ENCODE measurements at regions of chr7 and their contacts with region 1.

Region 1: GRCh38 chr7:23273141-23273599 is 26.0 kb upstream of the MALSU1 start:
- DNase-seq: peak; percentile 81
- H3K4me3 ChIP-seq: no peak overlapping the region
- H3K27ac ChIP-seq: no peak overlapping the region
- H3K27me3 ChIP-seq: peaks cover 22% of the 10 kb centered on the region
- CTCF ChIP-seq: peak; percentile 89

Region 2: GRCh38 chr7:23261843-23262452 is 11.2 kb before region 1 on chr7:
- CTCF ChIA-PET with region 1: interaction called, 101 read pairs
- POLR2A ChIA-PET with region 1: no interaction called
- DNase-seq: peak; percentile 33
- H3K4me3 ChIP-seq: no peak overlapping the region
- H3K27ac ChIP-seq: no peak overlapping the region
- H3K27me3 ChIP-seq: peaks cover 15% of the 10 kb centered on the region
- CTCF ChIP-seq: peak; percentile 96

Region 3: GRCh38 chr7:23294549-23295400 is 21.6 kb after region 1 on chr7:
- CTCF ChIA-PET with region 1: interaction called, 10 read pairs
- POLR2A ChIA-PET with region 1: no interaction called
- DNase-seq: no peak
- H3K4me3 ChIP-seq: no peak overlapping the region
- H3K27ac ChIP-seq: no peak overlapping the region
- H3K27me3 ChIP-seq: no peaks in the 10 kb centered on the region
- CTCF ChIP-seq: no peak

Region 4: GRCh38 chr7:23474094-23474828 is 201.1 kb after region 1 on chr7:
- CTCF ChIA-PET with region 1: interaction called, 13 read pairs
- POLR2A ChIA-PET with region 1: no interaction called
- DNase-seq: peak; percentile 89
- H3K4me3 ChIP-seq: peak overlapping the region; percentile 84
- H3K27ac ChIP-seq: no peak overlapping the region
- H3K27me3 ChIP-seq: no peaks in the 10 kb centered on the region
- CTCF ChIP-seq: no peak

Region 5: GRCh38 chr7:23523486-23524075 is 250.4 kb after region 1 on chr7:
- CTCF ChIA-PET with region 1: interaction called, 15 read pairs
- POLR2A ChIA-PET with region 1: no interaction called
- DNase-seq: no peak
- H3K4me3 ChIP-seq: no peak overlapping the region
- H3K27ac ChIP-seq: no peak overlapping the region
- H3K27me3 ChIP-seq: no peaks in the 10 kb centered on the region
- CTCF ChIP-seq: no peak

Region 6: GRCh38 chr7:23539494-23539907 is 266.3 kb after region 1 on chr7:
- CTCF ChIA-PET with region 1: interaction called, 24 read pairs
- POLR2A ChIA-PET with region 1: no interaction called
- DNase-seq: no peak
- H3K4me3 ChIP-seq: no peak overlapping the region
- H3K27ac ChIP-seq: no peak overlapping the region
- H3K27me3 ChIP-seq: no peaks in the 10 kb centered on the region
- CTCF ChIP-seq: no peak

Region 7: DNA sequence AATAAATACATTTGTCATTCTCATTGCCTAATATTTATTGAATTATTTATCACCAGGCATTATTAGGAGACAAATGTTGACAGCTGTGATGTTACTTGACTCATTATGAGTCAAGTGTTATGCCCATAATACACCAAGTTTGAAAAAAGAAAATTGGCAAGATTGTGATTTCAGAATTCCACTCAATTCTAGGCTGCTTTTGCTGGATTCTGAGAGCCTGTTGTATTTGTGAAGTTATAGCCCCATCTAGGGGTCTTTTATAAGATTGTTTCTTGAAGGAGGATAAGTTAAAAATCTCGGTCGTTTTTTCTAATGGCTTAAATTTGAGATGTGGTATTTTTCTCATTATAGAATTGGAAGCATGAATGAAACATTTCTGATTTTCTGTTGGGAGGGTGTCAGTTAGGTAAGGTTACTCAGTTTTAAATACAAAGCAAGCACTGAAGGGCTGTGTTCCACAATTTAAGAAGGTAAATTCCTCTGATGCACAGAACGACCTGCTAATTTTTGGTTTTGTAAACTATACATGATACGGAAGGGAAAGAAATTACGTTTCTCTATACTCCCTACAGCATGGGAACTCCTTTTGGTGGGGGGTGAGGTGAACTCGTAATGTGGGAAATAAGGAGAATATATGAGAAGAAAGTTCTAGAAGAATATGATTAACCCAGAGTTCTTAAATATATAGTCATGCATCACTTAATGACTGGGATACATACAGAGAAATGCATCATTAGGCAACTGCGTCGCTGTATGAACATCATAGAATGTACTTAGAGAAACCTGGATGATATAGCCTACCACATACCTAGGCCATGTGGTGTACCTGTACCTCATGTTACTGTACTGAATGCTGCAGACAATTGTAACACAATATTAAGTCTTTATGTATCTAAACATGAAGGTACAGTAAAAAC is 439.5 kb after region 1 on chr7:
- CTCF ChIA-PET with region 1: interaction called, 14 read pairs
- POLR2A ChIA-PET with region 1: interaction called, 4 read pairs
- DNase-seq: peak; percentile 29
- H3K4me3 ChIP-seq: no peak overlapping the region
- H3K27ac ChIP-seq: no peak overlapping the region
- H3K27me3 ChIP-seq: no peaks in the 10 kb centered on the region
- CTCF ChIP-seq: peak; percentile 57